K562 (cell line): ENCODE measurements at regions of chr6 and their contacts with region 1.

Region 1: GRCh38 chr6:144095331-144096002 is at the start of gene SF3B5:
- DNase-seq: peak; percentile 95 to 100 (median 96)
- ATAC-seq: peak; percentile 97
- H3K4me3 ChIP-seq: peak within 1 kb of the TSS; percentile 98
- H3K27ac ChIP-seq: peak within 1 kb of the TSS; percentile 91
- H3K4me1 ChIP-seq: peaks cover 10 to 13% of the 10 kb centered on the region in 2 experiments; a peak in 3 of 5 replicates
- H3K27me3 ChIP-seq: no peaks in the 10 kb centered on the region; a peak in 1 of 5 replicates
- CTCF ChIP-seq: no peak; a peak in 1 of 6 replicates
- EP300 ChIP-seq: peak; percentile 51; the same call in 1 of the 2 replicates
- POLR2A ChIP-seq: peak; percentile 99
- RAD21 ChIP-seq: peak in 1 of 2 experiments; percentile 5; a peak in 1 of 4 replicates
- polyA plus RNA-seq, gene SF3B5: 1,065 to 1,211 TPM

Region 2: GRCh38 chr6:143575440-143575839 is 520.0 kb before region 1 on chr6:
- CTCF ChIA-PET with region 1: no interaction called
- POLR2A ChIA-PET with region 1: interaction called, 3 read pairs
- in situ Hi-C with region 1: no loop called
- intact Hi-C with region 1: loop called (anchors 5 kb)
- DNase-seq: peak; percentile 79 to 85 (median 84)
- ATAC-seq: peak; percentile 95
- H3K4me3 ChIP-seq: no peak overlapping the region
- H3K27ac ChIP-seq: no peak overlapping the region
- H3K4me1 ChIP-seq: no peaks in the 10 kb centered on the region
- H3K27me3 ChIP-seq: peaks cover 0 to 3% of the 10 kb centered on the region in 2 experiments; a peak in 1 of 5 replicates
- CTCF ChIP-seq: peak; percentile 86 to 97 (median 94)
- EP300 ChIP-seq: no peak
- POLR2A ChIP-seq: no peak
- RAD21 ChIP-seq: peak; percentile 99

Region 3: GRCh38 chr6:144036064-144036834 is 59.2 kb before region 1 on chr6:
- CTCF ChIA-PET with region 1: no interaction called
- POLR2A ChIA-PET with region 1: interaction called, 6 read pairs
- in situ Hi-C with region 1: no loop called
- intact Hi-C with region 1: loop called (anchors 2 kb)
- DNase-seq: peak in 2 of 4 experiments; percentile 30 to 59
- ATAC-seq: peak; percentile 85
- H3K4me3 ChIP-seq: no peak overlapping the region
- H3K27ac ChIP-seq: no peak overlapping the region
- H3K4me1 ChIP-seq: no peaks in the 10 kb centered on the region
- H3K27me3 ChIP-seq: no peaks in the 10 kb centered on the region
- CTCF ChIP-seq: peak; percentile 20 to 54 (median 38); a peak in 5 of 6 replicates
- EP300 ChIP-seq: no peak
- POLR2A ChIP-seq: no peak
- RAD21 ChIP-seq: peak; percentile 60 to 63

Region 4: GRCh38 chr6:144063744-144064401 is 31.6 kb before region 1 on chr6:
- CTCF ChIA-PET with region 1: no interaction called
- POLR2A ChIA-PET with region 1: interaction called, 6 read pairs
- in situ Hi-C with region 1: no loop called
- intact Hi-C with region 1: loop called (anchors 1 kb)
- DNase-seq: peak; percentile 94 to 97 (median 96)
- ATAC-seq: peak; percentile 98
- H3K4me3 ChIP-seq: peak overlapping the region; percentile 76
- H3K27ac ChIP-seq: peak overlapping the region; percentile 83
- H3K4me1 ChIP-seq: peaks cover 15 to 17% of the 10 kb centered on the region in 2 experiments; a peak in 4 of 5 replicates
- H3K27me3 ChIP-seq: no peaks in the 10 kb centered on the region; a peak in 1 of 5 replicates
- CTCF ChIP-seq: peak; percentile 48 to 77 (median 67); a peak in 4 of 6 replicates
- EP300 ChIP-seq: no peak
- POLR2A ChIP-seq: peak; percentile 90
- RAD21 ChIP-seq: peak; percentile 20 to 46; a peak in 3 of 4 replicates

Region 5: DNA sequence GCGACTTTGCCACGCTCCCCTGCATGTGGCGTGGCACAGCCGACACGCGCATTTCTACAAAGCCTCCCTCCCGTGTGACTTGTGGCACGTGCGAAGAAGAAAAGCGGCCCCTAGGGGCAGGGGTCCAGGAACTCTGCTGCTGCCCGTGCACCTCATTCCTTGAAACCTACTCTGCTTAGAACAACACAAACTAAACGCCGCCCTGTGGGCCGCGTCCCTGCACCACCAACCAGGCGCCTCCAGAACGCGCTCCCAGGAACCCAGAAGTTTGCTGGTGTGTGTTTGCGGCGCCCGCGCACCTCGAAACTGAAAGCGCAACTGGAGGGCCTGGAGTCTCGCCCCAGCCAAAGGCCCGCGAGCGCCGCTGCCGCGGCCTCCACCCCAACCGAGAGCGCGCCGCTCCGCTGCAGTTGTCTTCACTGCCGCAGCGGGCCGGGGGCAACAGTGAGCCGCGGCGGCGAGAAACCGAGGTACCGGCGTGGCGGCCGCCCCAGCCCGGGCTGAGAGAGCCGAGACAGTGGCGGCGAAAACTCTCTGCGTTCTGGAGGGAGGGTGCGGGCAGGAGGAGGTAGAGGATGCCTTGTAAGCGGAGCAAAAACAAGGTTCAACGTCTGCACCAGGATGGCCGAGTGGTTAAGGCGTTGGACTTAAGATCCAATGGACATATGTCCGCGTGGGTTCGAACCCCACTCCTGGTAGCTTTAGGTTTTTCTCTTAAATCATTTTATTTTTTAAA is 120.6 kb after region 1 on chr6:
- CTCF ChIA-PET with region 1: no interaction called
- POLR2A ChIA-PET with region 1: interaction called, 5 read pairs
- in situ Hi-C with region 1: loop called (anchors 5 kb)
- intact Hi-C with region 1: no loop called
- DNase-seq: peak; percentile 89 to 96 (median 92)
- ATAC-seq: peak; percentile 94
- H3K4me3 ChIP-seq: peak overlapping the region; percentile 75
- H3K27ac ChIP-seq: peak overlapping the region; percentile 90
- H3K4me1 ChIP-seq: peaks cover 14% of the 10 kb centered on the region in 2 experiments
- H3K27me3 ChIP-seq: no peaks in the 10 kb centered on the region
- CTCF ChIP-seq: peak; percentile 75 to 90 (median 76)
- EP300 ChIP-seq: peak; percentile 78
- POLR2A ChIP-seq: peak; percentile 67
- RAD21 ChIP-seq: peak; percentile 25 to 56; a peak in 3 of 4 replicates

Region 6: GRCh38 chr6:144469144-144469575 is 373.7 kb after region 1 on chr6:
- CTCF ChIA-PET with region 1: no interaction called
- POLR2A ChIA-PET with region 1: no interaction called
- in situ Hi-C with region 1: no loop called
- intact Hi-C with region 1: no loop called
- DNase-seq: no peak
- ATAC-seq: no peak
- H3K4me3 ChIP-seq: no peak overlapping the region
- H3K27ac ChIP-seq: no peak overlapping the region
- H3K4me1 ChIP-seq: peaks cover 0 to 13% of the 10 kb centered on the region in 2 experiments; a peak in 3 of 5 replicates
- H3K27me3 ChIP-seq: no peaks in the 10 kb centered on the region
- CTCF ChIP-seq: no peak
- EP300 ChIP-seq: no peak
- POLR2A ChIP-seq: no peak
- RAD21 ChIP-seq: no peak

Region 7: DNA sequence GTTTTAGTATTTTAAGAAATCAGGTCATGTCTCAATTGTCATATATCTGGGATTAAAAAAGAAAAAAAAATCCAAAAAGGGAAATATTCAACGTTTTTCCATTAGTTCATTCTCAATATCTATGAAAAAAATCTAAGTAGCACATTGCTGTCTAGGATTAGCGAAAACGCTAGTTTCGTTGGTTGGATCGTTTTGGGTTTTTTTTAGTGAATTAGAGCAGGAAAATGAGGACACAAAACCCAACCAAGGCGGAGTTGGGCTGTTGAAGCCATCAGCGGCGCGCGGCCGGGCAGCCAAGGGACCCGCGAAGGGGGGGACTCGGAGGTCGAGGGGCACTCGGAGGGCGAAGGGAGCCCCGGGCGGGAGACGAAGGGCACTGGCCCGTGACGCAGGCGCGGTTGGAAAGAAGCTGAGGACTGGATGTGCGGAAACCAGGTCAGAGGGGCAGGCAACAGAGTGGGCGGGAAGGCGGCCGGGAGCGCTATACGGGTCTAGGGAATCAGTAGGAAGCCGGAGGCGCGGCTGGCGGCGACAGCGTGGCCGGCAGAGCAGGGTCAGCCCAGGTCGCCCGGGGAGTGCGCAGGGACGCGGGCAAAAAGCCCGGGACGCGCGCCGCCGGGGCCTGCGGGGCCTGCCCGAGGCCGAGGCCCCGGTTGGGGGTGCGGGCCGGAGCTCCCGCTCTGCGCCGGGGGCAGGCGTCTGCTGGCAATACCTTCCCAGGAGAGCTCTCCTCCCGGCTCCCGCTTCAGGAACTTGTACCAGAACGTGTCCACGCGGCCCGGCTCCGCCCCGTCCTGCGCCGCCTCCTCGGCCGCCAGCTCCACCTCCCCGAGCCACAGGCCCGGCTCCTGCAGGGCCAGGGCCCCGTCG is 1639.3 kb after region 1 on chr6:
- CTCF ChIA-PET with region 1: no interaction called
- POLR2A ChIA-PET with region 1: no interaction called
- in situ Hi-C with region 1: no loop called
- intact Hi-C with region 1: loop called (anchors 10 kb)
- DNase-seq: peak; percentile 82 to 92 (median 83)
- ATAC-seq: peak; percentile 87
- H3K4me3 ChIP-seq: peak overlapping the region; percentile 54
- H3K27ac ChIP-seq: peak overlapping the region; percentile 92
- H3K4me1 ChIP-seq: peaks cover 16 to 21% of the 10 kb centered on the region in 2 experiments; a peak in 3 of 5 replicates
- H3K27me3 ChIP-seq: no peaks in the 10 kb centered on the region
- CTCF ChIP-seq: no peak
- EP300 ChIP-seq: no peak
- POLR2A ChIP-seq: peak; percentile 87
- RAD21 ChIP-seq: no peak